ENCODE measurements at regions of chr11 and their contacts with region 1.

Region 1: GRCh38 chr11:23058656-23059055 is 198.4 kb upstream of the CCDC179 start:
- DNase-seq: no peak
- H3K4me3 Mint-ChIP-seq: no peak overlapping the region
- H3K27ac Mint-ChIP-seq: no peak overlapping the region
- H3K4me1 Mint-ChIP-seq: no peaks in the 10 kb centered on the region
- H3K27me3 Mint-ChIP-seq: no peaks in the 10 kb centered on the region

Region 2: DNA sequence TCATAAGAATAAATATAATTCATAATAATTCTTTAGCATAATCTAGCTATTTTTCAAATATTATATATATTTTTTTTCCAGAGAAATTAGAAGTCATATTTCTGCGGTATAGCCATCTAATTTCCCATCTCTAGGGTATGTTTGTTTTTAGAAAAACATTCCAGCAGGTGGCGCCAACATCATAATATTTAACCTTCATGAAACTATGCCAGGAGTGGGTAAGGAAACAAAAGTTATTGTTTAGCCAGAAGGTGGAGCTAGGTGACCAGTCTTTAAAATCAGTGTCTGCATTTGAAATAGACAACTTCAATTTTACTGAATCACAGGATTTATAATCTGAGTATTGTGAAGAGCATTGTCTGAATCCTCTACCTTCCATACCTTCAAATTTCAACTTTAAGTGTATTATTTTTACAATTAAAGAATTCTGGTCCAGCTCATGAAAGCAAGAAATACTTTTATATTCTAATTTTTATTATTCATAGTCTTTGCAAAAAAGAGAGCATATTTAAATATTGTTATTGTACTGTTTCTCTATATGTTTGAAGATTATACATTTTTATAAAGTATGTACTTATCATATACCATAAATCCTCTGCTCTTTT is 182.7 kb before region 1 on chr11:
- intact Hi-C with region 1: loop called (anchors 10 kb)
- DNase-seq: peak; percentile 89
- H3K4me3 Mint-ChIP-seq: no peak overlapping the region
- H3K27ac Mint-ChIP-seq: no peak overlapping the region
- H3K4me1 Mint-ChIP-seq: no peaks in the 10 kb centered on the region
- H3K27me3 Mint-ChIP-seq: no peaks in the 10 kb centered on the region

Region 3: DNA sequence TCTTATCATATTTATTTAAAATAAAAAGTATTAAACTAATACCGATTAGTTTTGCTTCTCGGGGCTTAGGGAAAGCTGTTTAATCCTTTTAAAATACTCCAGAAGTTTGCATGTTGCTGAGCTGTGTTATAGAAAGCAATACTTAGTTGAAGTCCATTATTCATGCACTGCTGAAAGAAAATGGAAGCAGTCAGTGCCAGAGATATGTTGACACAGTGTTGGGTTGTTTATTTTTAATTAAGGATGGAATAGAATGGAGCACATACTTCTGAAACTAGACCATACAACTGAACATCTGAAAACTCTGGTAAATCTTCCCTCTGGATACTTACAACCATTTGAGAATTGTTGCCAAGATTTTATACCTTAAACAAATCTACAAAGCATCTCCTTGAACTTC is 84.4 kb after region 1 on chr11:
- intact Hi-C with region 1: no loop called
- DNase-seq: no peak
- H3K4me3 Mint-ChIP-seq: no peak overlapping the region
- H3K27ac Mint-ChIP-seq: no peak overlapping the region
- H3K4me1 Mint-ChIP-seq: no peaks in the 10 kb centered on the region
- H3K27me3 Mint-ChIP-seq: no peaks in the 10 kb centered on the region

Measured in activated CD4-positive, alpha-beta T cell treated with anti-CD3 and anti-CD28 coated beads, Interleukin-2, amount 10 ng/mL, durations not matched to agents 24 days and 14 days (primary cell).